ENCODE measurements at regions of chr2 and their contacts with region 1.

Region 1: GRCh38 chr2:72993147-72993932 is 76.0 kb downstream of the EMX1 start:
- H3K4me3 ChIP-seq: no peak overlapping the region
- H3K27ac ChIP-seq: no peak overlapping the region
- H3K4me1 ChIP-seq: no peaks in the 10 kb centered on the region
- CTCF ChIP-seq: peak; percentile 51; the same call in 1 of the 2 replicates

Region 2: DNA sequence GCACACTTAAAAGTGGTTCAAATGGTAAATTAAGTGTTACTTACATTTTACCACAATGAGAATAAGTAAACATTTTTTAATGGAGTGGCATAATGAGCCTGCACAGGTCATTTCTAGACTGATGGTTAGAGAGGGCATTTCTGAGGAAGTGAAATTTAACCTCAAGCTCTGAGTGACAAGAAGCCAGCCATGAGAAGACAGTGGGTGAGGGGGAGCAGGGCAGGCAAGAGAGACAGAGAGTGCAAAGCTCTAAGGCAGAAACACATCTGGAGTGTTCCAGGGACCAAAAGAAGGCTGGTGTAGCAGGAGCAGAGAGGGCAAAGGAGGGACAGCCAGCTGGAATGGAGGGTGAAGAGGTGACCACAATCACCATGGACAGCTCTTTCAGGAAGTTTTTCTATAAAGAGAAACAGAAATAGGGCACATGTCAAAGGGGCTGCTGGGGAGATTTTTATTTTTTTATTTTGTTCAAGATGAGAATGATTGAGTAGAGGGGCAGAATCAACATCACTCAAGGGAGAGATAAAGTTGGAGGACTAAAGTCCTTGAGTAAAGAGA is 146.7 kb before region 1 on chr2:
- CTCF ChIA-PET with region 1: no interaction called
- POLR2A ChIA-PET with region 1: no interaction called
- H3K4me3 ChIP-seq: no peak overlapping the region
- H3K27ac ChIP-seq: no peak overlapping the region
- H3K4me1 ChIP-seq: no peaks in the 10 kb centered on the region
- CTCF ChIP-seq: no peak

Region 3: GRCh38 chr2:72973566-72974435 is 19.5 kb before region 1 on chr2:
- CTCF ChIA-PET with region 1: interaction called, 10 read pairs
- POLR2A ChIA-PET with region 1: no interaction called
- H3K4me3 ChIP-seq: no peak overlapping the region
- H3K27ac ChIP-seq: no peak overlapping the region
- H3K4me1 ChIP-seq: no peaks in the 10 kb centered on the region
- CTCF ChIP-seq: peak; percentile 68

Region 4: GRCh38 chr2:73004466-73004865 is 11.1 kb after region 1 on chr2:
- CTCF ChIA-PET with region 1: interaction called, 13 read pairs
- POLR2A ChIA-PET with region 1: no interaction called
- H3K4me3 ChIP-seq: no peak overlapping the region
- H3K27ac ChIP-seq: no peak overlapping the region
- H3K4me1 ChIP-seq: no peaks in the 10 kb centered on the region
- CTCF ChIP-seq: no peak

Region 5: DNA sequence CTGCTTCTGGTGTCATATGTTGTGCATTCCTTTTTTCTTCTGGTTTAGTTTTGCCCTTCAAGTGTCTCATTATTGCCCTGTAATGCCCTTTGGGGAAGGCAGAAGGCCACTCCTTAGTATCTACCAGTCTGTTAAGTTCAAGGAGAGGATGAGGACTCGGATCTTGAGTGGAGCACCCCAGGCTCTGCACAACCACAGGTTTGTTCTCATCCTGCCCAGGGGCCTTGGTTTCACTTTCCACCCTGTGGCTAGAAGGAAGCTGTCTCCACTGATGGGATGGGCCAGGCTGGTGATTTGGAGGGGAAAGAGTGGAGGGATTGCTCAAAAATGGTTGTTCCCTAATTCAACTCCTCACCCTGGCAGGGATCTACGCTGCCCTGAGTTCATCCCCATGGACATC is 149.6 kb after region 1 on chr2:
- CTCF ChIA-PET with region 1: no interaction called
- POLR2A ChIA-PET with region 1: no interaction called
- H3K4me3 ChIP-seq: no peak overlapping the region
- H3K27ac ChIP-seq: no peak overlapping the region
- H3K4me1 ChIP-seq: no peaks in the 10 kb centered on the region
- CTCF ChIP-seq: no peak

Region 6: GRCh38 chr2:73212448-73213176 is 219.3 kb after region 1 on chr2:
- CTCF ChIA-PET with region 1: interaction called, 11 read pairs
- POLR2A ChIA-PET with region 1: no interaction called
- H3K4me3 ChIP-seq: no peak overlapping the region
- H3K27ac ChIP-seq: no peak overlapping the region
- H3K4me1 ChIP-seq: no peaks in the 10 kb centered on the region
- CTCF ChIP-seq: peak; percentile 67

Region 7: GRCh38 chr2:73385595-73386341 is 392.4 kb after region 1 on chr2 and contains the start of gene ALMS1:
- CTCF ChIA-PET with region 1: no interaction called
- POLR2A ChIA-PET with region 1: no interaction called
- H3K4me3 ChIP-seq: peak within 1 kb of the TSS; percentile 96
- H3K27ac ChIP-seq: peak within 1 kb of the TSS; percentile 89
- H3K4me1 ChIP-seq: no peaks in the 10 kb centered on the region; the same call in 1 of the 2 replicates
- CTCF ChIP-seq: peak; percentile 70; the same call in 1 of the 2 replicates